Heart right ventricle (tissue), 16 donors: ENCODE measurements at regions of chr19 and their contacts with region 1.

Region 1: DNA sequence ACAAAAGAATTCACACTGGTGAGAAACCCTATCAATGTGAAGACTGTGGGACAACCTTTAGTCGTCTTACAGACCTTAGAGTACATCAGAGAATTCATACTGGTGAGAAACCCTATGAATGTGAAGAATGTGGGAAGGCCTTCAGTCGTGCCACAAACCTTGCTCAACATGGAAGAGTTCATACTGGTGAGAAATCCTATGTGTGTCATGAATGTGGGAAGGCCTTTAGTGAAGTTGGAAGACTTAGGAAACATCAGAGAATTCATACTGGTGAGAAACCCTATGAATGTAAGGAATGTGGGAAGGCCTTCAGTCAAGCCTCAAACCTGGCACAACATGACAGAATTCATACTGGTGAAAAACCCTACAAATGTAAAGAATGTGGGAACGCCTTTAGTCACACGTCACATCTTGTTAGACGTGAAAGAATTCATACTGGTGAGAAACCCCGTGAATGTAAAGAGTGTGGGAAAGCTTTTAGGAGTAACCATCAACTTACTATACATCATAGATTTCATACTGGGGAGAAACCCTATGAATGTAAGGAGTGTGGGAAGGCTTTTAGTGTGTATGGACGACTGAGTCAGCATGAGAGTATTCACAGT is 24.0 kb upstream of the ZNF573 start:
- DNase-seq: no peak
- ATAC-seq: no peak
- H3K4me3 ChIP-seq: no peak overlapping the region
- H3K27ac ChIP-seq: no peak overlapping the region
- H3K4me1 ChIP-seq: no peaks in the 10 kb centered on the region
- H3K27me3 ChIP-seq: no peaks in the 10 kb centered on the region
- CTCF ChIP-seq: no peak

Region 2: GRCh38 chr19:37790244-37790925 is 13.0 kb before region 1 on chr19:
- intact Hi-C with region 1: loop called in 1 of 10 experiments (anchors 1 kb)
- DNase-seq: no peak
- ATAC-seq: no peak
- H3K4me3 ChIP-seq: no peak overlapping the region
- H3K27ac ChIP-seq: no peak overlapping the region
- H3K4me1 ChIP-seq: no peaks in the 10 kb centered on the region
- H3K27me3 ChIP-seq: no peaks in the 10 kb centered on the region
- CTCF ChIP-seq: no peak